OCI-LY7 (cell line): ENCODE measurements at regions of chr5 and their contacts with region 1.

Region 1: DNA sequence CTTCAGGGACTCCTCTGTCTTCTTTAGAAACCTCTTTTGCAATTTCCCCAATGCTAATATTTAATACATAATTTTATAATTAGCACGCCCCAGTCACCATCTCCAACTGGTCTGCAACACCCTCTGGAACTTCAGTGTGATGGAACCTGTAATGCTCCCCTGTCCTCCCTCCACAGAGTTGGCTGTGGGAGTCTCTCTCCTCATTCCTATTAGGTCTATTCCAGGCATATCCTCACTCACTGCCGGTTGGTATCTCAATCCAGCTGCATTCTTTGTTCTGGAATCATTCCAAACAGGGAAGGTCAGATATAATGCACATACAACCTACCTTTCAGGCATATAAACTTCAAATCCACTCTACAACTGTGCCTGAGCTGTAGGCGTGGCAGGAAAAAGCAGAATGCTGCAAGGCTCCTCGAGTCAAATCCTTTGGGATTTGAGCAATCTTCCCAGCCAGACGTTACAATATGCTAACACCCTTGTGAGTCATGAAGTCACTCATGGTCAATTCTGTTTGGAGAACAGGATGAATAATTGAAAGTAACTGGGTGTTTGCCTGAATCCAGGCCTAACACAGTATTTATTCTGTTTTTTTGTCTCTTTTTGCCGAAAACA is 293.8 kb downstream of the CWC27 start:
- DNase-seq: no peak
- H3K4me3 ChIP-seq: peak overlapping the region; percentile 35
- H3K27ac ChIP-seq: peak overlapping the region; percentile 93
- H3K4me1 ChIP-seq: peaks cover 98% of the 10 kb centered on the region
- CTCF ChIP-seq: no peak

Region 2: DNA sequence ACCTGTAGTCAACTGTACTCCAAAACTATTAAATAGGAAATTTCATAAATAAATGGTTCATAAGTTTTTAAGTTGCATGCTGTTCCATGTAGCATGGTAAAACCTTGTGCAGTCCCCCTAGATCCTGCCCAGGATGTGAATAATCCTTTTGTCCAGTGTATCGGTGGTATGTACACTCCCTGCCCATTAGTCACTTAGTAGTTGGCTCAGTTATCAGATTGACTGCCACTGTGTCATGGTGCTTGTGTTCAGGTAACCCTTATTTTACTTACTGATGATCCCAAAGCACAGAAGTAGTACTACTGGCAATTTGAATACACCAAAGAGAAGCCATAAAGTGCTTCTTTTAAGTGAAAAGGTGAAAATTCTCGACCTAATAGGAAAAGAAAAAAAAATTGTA is 762.8 kb before region 1 on chr5:
- CTCF ChIA-PET with region 1: no interaction called
- POLR2A ChIA-PET with region 1: no interaction called
- intact Hi-C with region 1: no loop called
- DNase-seq: no peak
- H3K4me3 ChIP-seq: no peak overlapping the region
- H3K27ac ChIP-seq: no peak overlapping the region
- H3K4me1 ChIP-seq: no peaks in the 10 kb centered on the region
- CTCF ChIP-seq: no peak

Region 3: GRCh38 chr5:65035211-65036206 is 27.1 kb before region 1 on chr5:
- CTCF ChIA-PET with region 1: interaction called, 3 read pairs
- POLR2A ChIA-PET with region 1: interaction called, 57 read pairs
- intact Hi-C with region 1: loop called (anchors 1 kb)
- DNase-seq: peak; percentile 76
- H3K4me3 ChIP-seq: peak overlapping the region; percentile 66
- H3K27ac ChIP-seq: peak overlapping the region; percentile 80
- H3K4me1 ChIP-seq: peaks cover 63% of the 10 kb centered on the region
- CTCF ChIP-seq: peak; percentile 29; the same call in 1 of the 2 replicates

Region 4: GRCh38 chr5:65047948-65048690 is 14.5 kb before region 1 on chr5:
- CTCF ChIA-PET with region 1: no interaction called
- POLR2A ChIA-PET with region 1: interaction called, 61 read pairs
- intact Hi-C with region 1: no loop called
- DNase-seq: no peak
- H3K4me3 ChIP-seq: peak overlapping the region; percentile 31
- H3K27ac ChIP-seq: peak overlapping the region; percentile 49
- H3K4me1 ChIP-seq: peaks cover 72% of the 10 kb centered on the region
- CTCF ChIP-seq: no peak

Region 5: DNA sequence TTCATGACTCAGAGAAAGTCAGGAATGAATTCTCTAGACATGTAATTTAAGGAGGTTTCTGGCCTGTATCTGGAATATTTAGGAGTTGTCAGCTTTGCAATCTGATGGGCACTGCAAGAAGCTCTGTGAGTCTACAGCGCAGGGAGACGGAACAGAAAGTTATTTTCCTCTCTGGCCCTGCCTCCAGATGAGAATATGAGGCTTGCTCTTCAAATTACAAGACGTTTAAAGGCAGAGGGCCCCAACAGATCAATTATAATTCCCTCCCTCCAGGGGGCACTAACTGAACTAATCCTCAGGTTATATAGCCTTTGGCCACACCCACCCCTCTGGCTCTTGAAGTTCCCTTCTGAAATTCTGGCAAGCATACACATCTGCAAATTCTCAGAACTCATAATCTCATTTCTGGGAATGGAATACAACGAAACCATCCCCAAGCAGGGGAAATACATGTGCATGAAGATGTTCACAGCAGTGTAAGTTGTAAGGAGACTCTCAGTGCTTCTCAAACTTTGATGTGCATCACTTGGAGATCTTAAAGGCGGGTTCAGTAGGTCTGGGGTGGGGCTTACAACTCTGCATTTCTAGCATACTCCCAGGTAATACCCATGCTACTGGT is 13.8 kb after region 1 on chr5:
- CTCF ChIA-PET with region 1: interaction called, 4 read pairs
- POLR2A ChIA-PET with region 1: interaction called, 136 read pairs
- intact Hi-C with region 1: no loop called
- DNase-seq: peak; percentile 94
- H3K4me3 ChIP-seq: peak overlapping the region; percentile 10
- H3K27ac ChIP-seq: peak overlapping the region; percentile 64
- H3K4me1 ChIP-seq: peaks cover 71% of the 10 kb centered on the region
- CTCF ChIP-seq: peak; percentile 84

Region 6: GRCh38 chr5:65562731-65563701 is 500.4 kb after region 1 on chr5 and contains the starts of genes CENPK and PPWD1:
- CTCF ChIA-PET with region 1: no interaction called
- POLR2A ChIA-PET with region 1: interaction called, 4 read pairs
- intact Hi-C with region 1: loop called (anchors 2 kb)
- DNase-seq: peak; percentile 97
- H3K4me3 ChIP-seq: peak within 1 kb of the TSS; percentile 90
- H3K27ac ChIP-seq: peak within 1 kb of the TSS; percentile 80
- H3K4me1 ChIP-seq: peaks cover 29% of the 10 kb centered on the region
- CTCF ChIP-seq: no peak
- total RNA-seq, gene CENPK: 52.6 and 62.4 TPM in 2 replicates
- total RNA-seq, gene PPWD1: 51.5 and 67.6 TPM in 2 replicates